CD4-positive, alpha-beta T cell (primary cell): ENCODE measurements at regions of chr14 and their contacts with region 1.

Region 1: DNA sequence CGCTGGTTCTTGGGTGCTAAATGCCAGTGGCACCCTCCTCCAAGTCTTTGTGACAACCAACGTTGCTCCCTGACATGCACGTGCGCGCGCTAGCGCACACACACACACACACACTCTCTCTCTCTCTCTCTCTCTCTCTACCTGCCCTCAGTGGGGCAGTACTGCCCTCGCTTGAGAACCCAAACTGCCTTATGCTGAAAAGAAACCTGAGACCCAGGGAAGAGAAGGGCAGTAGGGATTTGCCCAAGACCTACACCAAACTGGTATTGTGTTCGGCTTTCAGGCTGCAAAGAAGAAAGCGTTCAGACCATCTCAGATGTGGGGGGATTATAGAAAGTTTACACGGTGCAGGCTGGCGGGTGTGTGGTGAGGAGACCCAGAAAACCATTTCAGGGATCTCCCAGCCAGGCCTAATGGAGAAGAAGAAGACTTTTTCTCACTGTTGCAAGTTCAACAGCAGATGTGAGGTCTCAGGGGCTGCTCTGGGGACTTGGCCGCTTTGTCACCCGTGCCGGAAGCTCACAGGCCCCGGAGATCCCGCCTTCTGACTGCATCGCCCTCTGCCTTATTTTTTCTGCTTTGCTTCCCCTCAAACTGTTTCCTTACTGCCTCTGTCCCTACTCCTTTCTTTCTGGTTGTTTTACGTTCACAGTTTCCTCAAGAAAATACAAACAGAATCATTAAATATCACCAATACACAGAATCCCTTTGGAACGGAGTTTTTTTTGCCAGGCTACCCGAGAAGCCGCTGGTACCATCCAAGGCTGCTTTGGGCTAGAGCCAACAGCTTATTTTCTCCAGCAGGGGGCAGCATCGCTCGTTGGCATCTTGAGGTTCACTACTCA is 82.4 kb downstream of the PPM1A start:
- DNase-seq: peak; percentile 55 to 86 (median 72)
- ATAC-seq: peak; percentile 78
- H3K4me3 ChIP-seq: peak overlapping the region; percentile 54
- H3K4me3 Mint-ChIP-seq: peak overlapping the region; percentile 96
- H3K27ac ChIP-seq: peak overlapping the region in 1 of 2 donors; percentile 29
- H3K27ac Mint-ChIP-seq: peak overlapping the region; percentile 85
- H3K4me1 ChIP-seq: peaks cover 13% of the 10 kb centered on the region
- H3K4me1 Mint-ChIP-seq: peaks cover 32% of the 10 kb centered on the region
- H3K27me3 ChIP-seq: peaks cover 3 to 6% of the 10 kb centered on the region in 2 experiments
- H3K27me3 Mint-ChIP-seq: peaks cover 56% of the 10 kb centered on the region
- CTCF ChIP-seq: peak; percentile 88

Region 2: DNA sequence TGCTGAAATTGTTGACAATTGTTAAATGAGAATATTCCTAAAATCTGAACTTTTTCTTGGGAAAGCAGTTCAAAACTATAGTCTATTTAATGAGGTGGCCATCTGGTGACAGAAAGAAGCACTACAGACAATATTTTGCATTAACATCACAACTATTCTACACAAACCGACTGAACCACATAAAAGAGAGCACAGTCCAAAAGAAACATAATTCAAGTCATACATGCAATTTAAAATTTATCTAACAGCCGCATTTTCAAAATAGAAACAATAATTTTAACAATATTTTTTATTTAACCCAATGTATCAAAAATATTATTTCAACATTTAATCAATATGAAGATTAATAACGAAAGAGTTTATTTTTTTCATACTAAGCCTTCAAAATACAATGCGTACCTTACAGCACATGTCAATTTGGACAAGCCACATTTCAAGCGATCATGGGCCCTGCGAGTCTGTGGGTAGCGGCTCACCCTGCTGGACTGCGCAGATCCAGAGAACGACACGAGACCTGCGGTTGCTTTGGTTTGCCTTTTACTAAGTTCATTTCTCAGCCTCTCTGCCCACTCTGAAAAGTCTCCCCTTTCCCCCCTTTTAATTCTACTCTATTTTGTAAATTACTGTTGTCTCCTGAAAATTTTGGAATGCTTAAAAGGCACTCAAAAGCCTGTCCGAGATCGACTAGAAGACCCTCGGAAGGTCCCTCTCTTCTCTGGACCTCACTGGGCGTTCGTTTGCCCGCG is 412.4 kb before region 1 on chr14:
- CTCF ChIA-PET with region 1: no interaction called
- POLR2A ChIA-PET with region 1: no interaction called
- intact Hi-C with region 1: no loop called
- DNase-seq: peak in 3 of 14 experiments; percentile 27 to 35 (median 33)
- ATAC-seq: no peak
- H3K4me3 ChIP-seq: peak overlapping the region; percentile 47
- H3K4me3 Mint-ChIP-seq: peak overlapping the region; percentile 73
- H3K27ac ChIP-seq: no peak overlapping the region
- H3K27ac Mint-ChIP-seq: no peak overlapping the region
- H3K4me1 ChIP-seq: peaks cover 12% of the 10 kb centered on the region
- H3K4me1 Mint-ChIP-seq: peaks cover 8% of the 10 kb centered on the region
- H3K27me3 ChIP-seq: peaks cover 12 to 47% of the 10 kb centered on the region in 2 experiments
- H3K27me3 Mint-ChIP-seq: peaks cover 72% of the 10 kb centered on the region
- CTCF ChIP-seq: peak; percentile 51

Region 3: DNA sequence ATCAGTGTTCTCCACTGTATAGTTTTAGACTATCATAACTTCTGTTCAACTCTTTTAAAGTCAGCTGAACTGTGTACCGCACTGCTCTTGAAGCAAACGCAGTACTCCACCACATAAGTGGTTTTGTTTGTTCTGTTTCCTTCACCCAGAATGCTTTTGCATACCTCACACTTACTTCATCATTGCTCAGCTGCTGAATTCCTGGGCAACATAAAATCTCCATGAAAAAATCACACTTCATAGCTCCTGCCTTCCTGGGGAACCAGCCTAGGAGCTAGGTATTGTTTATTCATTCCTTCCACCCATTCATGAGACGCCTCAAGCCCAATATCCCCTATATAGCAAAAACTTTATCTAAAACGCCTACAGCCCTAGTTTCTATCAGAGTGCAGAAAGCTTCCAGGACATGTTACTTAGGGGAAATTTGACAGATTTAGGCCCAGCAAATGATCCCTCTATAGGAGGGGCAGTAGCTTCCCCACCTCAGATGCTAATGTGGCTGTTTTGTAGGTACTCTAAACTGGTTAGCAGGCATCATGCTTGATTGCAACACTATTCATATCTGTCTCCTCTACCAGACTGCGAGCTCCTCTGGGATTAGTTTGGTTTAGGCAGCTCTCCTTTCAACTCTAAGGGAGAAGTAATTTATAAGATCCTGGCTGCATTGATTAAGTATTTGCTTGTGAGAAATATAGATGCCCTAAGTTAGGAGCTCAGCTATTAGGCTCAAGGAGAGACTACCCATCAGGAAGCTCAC is 367.0 kb before region 1 on chr14:
- CTCF ChIA-PET with region 1: interaction called, 6 read pairs
- POLR2A ChIA-PET with region 1: no interaction called
- intact Hi-C with region 1: loop called in 1 of 2 experiments (anchors 5 kb)
- DNase-seq: peak in 2 of 14 experiments; percentile 13 to 18
- ATAC-seq: peak; percentile 10
- H3K4me3 ChIP-seq: peak overlapping the region; percentile 64
- H3K4me3 Mint-ChIP-seq: peak overlapping the region; percentile 94
- H3K27ac ChIP-seq: no peak overlapping the region
- H3K27ac Mint-ChIP-seq: peak overlapping the region; percentile 96
- H3K4me1 ChIP-seq: peaks cover 9% of the 10 kb centered on the region
- H3K4me1 Mint-ChIP-seq: peaks cover 22% of the 10 kb centered on the region
- H3K27me3 ChIP-seq: no peaks in the 10 kb centered on the region
- H3K27me3 Mint-ChIP-seq: no peaks in the 10 kb centered on the region
- CTCF ChIP-seq: no peak

Region 4: DNA sequence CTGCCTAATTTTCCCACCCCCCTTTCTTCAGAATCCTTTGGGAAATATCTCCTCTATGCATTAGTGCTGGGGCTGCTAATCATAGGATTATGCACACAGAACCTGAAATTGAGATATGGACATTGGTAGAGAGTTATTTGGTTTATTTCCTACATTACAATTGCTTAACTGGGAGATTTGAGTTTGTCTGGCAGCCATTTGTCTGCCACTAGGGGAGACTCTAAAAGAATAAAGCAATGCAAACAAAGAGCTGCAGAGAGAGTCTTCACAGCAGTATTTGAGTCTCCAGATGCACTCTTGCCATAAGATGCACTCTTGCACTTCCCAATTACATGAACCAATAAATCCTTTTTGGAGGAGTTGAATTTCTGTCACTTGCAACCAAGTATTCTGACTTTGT is 251.7 kb before region 1 on chr14:
- CTCF ChIA-PET with region 1: no interaction called
- POLR2A ChIA-PET with region 1: no interaction called
- intact Hi-C with region 1: loop called in 1 of 2 experiments (anchors 10 kb)
- DNase-seq: no peak
- ATAC-seq: no peak
- H3K4me3 ChIP-seq: no peak overlapping the region
- H3K4me3 Mint-ChIP-seq: no peak overlapping the region
- H3K27ac ChIP-seq: no peak overlapping the region
- H3K27ac Mint-ChIP-seq: no peak overlapping the region
- H3K4me1 ChIP-seq: no peaks in the 10 kb centered on the region
- H3K4me1 Mint-ChIP-seq: no peaks in the 10 kb centered on the region
- H3K27me3 ChIP-seq: no peaks in the 10 kb centered on the region
- H3K27me3 Mint-ChIP-seq: peaks cover 22% of the 10 kb centered on the region
- CTCF ChIP-seq: no peak

Region 5: DNA sequence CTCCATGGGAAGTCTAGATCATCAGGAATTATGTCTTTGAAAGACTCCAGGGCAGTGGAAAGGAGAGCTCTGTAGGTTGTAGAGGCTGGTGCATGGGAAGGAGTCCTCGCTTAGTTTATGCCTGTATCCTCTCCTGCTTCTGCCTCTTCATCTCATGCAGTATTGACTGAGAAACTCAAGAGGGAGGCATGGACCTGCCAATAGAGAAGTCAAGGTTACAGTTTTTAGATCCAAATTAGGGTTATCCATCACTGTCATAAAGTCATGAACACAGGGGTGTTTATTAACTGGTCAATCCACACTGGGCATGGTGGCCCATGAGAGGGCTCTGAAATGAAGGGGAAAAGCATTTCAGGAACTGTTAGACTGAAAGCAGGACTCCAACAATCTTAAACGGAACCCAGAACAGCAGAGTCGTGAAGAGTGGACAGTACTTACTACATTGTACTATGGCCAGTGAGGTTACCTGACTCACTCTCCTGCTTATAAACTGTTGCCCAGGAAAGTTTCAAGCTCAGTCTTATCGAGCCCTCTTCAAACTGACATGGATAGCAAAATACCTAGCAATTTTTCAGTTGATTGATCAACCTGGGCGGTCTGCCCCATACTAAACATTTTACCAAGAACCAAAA is 136.1 kb before region 1 on chr14:
- CTCF ChIA-PET with region 1: no interaction called
- POLR2A ChIA-PET with region 1: no interaction called
- intact Hi-C with region 1: loop called in 1 of 2 experiments (anchors 10 kb)
- DNase-seq: peak in 3 of 14 experiments; percentile 7 to 31 (median 30)
- ATAC-seq: peak; percentile 68
- H3K4me3 ChIP-seq: no peak overlapping the region
- H3K4me3 Mint-ChIP-seq: no peak overlapping the region
- H3K27ac ChIP-seq: no peak overlapping the region
- H3K27ac Mint-ChIP-seq: no peak overlapping the region
- H3K4me1 ChIP-seq: no peaks in the 10 kb centered on the region
- H3K4me1 Mint-ChIP-seq: no peaks in the 10 kb centered on the region
- H3K27me3 ChIP-seq: no peaks in the 10 kb centered on the region
- H3K27me3 Mint-ChIP-seq: peaks cover 11% of the 10 kb centered on the region
- CTCF ChIP-seq: no peak

Region 6: DNA sequence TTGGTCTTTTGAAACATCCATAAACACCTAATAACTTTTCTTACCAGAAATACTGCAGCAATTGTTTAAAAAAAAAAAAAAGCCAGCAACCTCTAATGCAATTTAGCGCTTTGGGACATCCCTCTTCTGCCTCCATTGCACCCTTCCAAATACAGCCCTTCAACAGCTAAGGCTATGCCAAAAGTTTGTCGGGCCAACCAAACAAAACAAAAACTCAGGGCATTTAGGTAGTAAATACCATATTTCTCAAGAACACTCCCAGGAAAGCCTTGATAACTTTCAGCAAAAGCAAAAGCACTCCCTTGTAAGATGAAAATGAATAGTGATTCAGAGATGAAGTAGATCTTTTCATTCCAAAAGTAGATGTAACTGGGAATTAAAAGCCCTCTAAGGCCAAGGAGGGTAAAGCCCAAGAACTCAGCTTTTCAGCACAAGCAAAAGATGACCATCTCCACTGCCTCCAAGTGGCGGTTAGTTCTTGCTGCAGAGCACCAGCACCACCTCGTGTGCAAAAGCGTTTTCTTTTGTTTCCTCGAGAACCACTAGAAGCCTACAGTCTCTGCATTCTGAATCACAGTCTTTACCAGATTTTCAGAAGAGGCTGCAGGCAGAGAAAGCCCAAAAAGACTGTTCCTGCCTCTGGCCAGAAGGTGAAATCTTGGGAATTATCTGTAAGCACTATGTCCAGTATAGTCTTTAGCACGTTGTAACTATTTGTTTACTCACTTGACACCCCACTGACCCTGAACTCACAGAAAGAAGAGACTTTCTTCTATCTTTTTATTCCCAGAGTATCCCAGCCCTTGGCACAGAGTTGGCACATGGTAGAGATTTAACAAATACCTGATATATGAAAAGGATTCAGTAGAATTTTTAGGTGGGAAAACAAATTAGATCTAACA is 230.7 kb after region 1 on chr14:
- CTCF ChIA-PET with region 1: no interaction called
- POLR2A ChIA-PET with region 1: no interaction called
- intact Hi-C with region 1: loop called in 1 of 2 experiments (anchors 5 kb)
- DNase-seq: peak in 4 of 14 experiments; percentile 6 to 35 (median 16)
- ATAC-seq: no peak
- H3K4me3 ChIP-seq: no peak overlapping the region
- H3K4me3 Mint-ChIP-seq: no peak overlapping the region
- H3K27ac ChIP-seq: no peak overlapping the region
- H3K27ac Mint-ChIP-seq: no peak overlapping the region
- H3K4me1 ChIP-seq: no peaks in the 10 kb centered on the region
- H3K4me1 Mint-ChIP-seq: no peaks in the 10 kb centered on the region
- H3K27me3 ChIP-seq: peaks cover 3 to 6% of the 10 kb centered on the region in 2 experiments
- H3K27me3 Mint-ChIP-seq: peaks cover 8% of the 10 kb centered on the region
- CTCF ChIP-seq: no peak

Region 7: GRCh38 chr14:61252369-61253063 is 921.1 kb after region 1 on chr14:
- CTCF ChIA-PET with region 1: no interaction called
- POLR2A ChIA-PET with region 1: no interaction called
- intact Hi-C with region 1: loop called in 1 of 2 experiments (anchors 5 kb)
- DNase-seq: peak; percentile 28 to 80 (median 46)
- ATAC-seq: peak; percentile 92
- H3K4me3 ChIP-seq: no peak overlapping the region
- H3K4me3 Mint-ChIP-seq: no peak overlapping the region
- H3K27ac ChIP-seq: no peak overlapping the region
- H3K27ac Mint-ChIP-seq: no peak overlapping the region
- H3K4me1 ChIP-seq: peaks cover 2% of the 10 kb centered on the region
- H3K4me1 Mint-ChIP-seq: no peaks in the 10 kb centered on the region
- H3K27me3 ChIP-seq: peaks cover 0 to 13% of the 10 kb centered on the region in 2 experiments
- H3K27me3 Mint-ChIP-seq: peaks cover 45% of the 10 kb centered on the region
- CTCF ChIP-seq: peak; percentile 72